ENCODE measurements at regions of chr3 and their contacts with region 1.

Region 1: GRCh38 chr3:72234391-72234790 is 449.4 kb upstream of the PROK2 start:
- DNase-seq: no peak
- H3K4me3 ChIP-seq: no peak overlapping the region
- H3K27ac ChIP-seq: peak overlapping the region in 44 of 59 donors; percentile 15 to 97 (median 78)
- H3K27me3 ChIP-seq: peaks cover 0 to 1% (median 0%) of the 10 kb centered on the region in 45 donors
- CTCF ChIP-seq: no peak

Region 2: DNA sequence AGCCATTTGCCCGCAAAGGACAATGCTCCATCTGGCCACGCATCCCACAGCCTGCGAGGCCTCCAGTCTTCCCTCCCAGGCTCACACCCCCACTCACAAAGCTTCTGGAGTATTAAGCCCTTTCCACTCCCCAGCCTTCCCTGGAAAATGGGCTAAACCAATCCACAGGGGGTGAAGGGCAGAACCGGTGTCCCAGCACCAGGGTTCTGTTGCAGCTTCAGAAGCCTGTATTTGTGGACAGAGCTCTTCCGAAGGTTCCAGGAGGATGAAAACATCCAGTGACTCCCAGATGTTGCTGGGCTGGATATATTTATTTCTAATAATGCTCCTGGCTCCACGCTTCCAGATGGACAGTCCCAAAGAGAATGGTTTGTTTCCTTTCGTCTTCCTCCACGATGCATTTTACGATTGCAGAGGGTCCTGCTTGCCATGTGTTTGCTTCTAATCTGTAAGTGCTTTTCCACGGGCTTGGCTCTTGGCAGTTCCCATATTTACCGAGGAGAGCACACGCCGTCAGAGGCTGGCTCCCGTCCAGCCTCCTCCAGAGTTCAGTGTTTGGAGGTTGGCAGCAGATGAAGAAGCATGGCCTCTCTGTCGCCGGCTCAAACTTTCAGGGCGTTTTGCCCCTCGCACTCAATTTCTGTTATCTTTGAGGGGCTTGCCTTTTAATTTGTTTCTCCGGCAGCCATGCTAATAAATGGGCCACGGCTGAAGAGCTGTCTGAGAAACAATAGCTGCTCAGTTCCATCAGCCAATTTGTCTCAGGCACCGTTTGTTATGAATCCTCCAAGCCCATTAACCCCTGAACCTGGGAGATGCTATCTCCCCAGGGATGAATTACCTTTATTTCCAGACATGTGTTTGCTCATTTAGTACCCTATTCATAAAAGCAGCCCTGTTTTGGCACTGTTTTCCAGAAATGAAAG is 81.6 kb before region 1 on chr3:
- intact Hi-C with region 1: loop called in 1 of 2 experiments (anchors 5 kb)
- DNase-seq: peak; percentile 41 to 73 (median 58)
- H3K4me3 ChIP-seq: peak overlapping the region; percentile 0 to 70 (median 48)
- H3K27ac ChIP-seq: peak overlapping the region; percentile 73 to 98 (median 94)
- H3K27me3 ChIP-seq: no peaks in the 10 kb centered on the region
- CTCF ChIP-seq: peak in 3 of 56 donors; percentile 9 to 22 (median 18)

Region 3: GRCh38 chr3:72171463-72171881 is 62.9 kb before region 1 on chr3:
- intact Hi-C with region 1: loop called (anchors 2 to 5 kb)
- DNase-seq: peak in 5 of 10 donors; percentile 43 to 80 (median 51)
- H3K4me3 ChIP-seq: peak overlapping the region in 42 of 59 donors; percentile 2 to 61 (median 32)
- H3K27ac ChIP-seq: peak overlapping the region; percentile 56 to 99 (median 92)
- H3K27me3 ChIP-seq: no peaks in the 10 kb centered on the region
- CTCF ChIP-seq: peak in 2 of 56 donors; percentile 19 to 22

Region 4: GRCh38 chr3:72185549-72186399 is 48.6 kb before region 1 on chr3:
- intact Hi-C with region 1: loop called in 1 of 2 experiments (anchors 5 kb)
- DNase-seq: no peak
- H3K4me3 ChIP-seq: peak overlapping the region in 1 of 59 donors; percentile 0
- H3K27ac ChIP-seq: peak overlapping the region in 40 of 59 donors; percentile 1 to 81 (median 44)
- H3K27me3 ChIP-seq: no peaks in the 10 kb centered on the region
- CTCF ChIP-seq: no peak

Region 5: DNA sequence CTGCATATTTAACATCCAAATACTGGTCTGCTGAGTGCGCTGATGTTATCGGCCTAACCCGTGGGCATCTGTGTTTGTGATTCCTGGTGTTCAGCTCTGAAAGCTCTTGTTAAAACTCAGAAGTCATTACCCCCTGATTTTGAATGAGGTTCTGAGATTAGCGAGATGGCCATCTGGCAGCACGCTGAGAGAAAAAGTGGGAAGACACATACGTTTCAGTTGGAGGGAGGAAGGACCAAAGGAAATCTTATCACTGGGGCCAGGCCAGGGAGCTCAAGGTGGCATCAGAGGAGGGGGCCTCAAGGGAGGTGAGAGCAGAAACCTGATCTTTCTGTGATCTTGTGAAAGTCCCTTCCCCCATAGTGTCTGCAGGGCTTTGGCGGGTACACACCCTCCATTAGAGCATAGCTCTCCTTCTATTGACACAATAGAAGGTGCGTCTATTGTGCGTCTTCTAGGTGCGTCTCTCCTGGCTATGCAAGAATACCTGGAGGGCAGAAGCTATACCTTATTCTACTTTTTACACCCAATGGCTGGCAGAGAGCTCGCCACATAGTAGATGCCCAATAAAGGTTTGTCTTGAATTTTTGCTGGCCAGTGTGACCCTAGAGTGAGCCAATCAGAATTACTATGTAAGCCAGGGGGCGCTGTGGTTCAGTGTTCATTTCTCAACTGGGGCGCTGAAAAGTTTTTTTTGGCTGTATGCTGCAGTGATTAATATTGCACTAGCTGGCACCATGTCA is 431.5 kb after region 1 on chr3:
- intact Hi-C with region 1: loop called in 1 of 2 experiments (anchors 10 kb)
- DNase-seq: no peak
- H3K4me3 ChIP-seq: no peak overlapping the region
- H3K27ac ChIP-seq: peak overlapping the region in 15 of 59 donors; percentile 2 to 99 (median 97)
- H3K27me3 ChIP-seq: peaks cover 0 to 9% (median 0%) of the 10 kb centered on the region in 45 donors
- CTCF ChIP-seq: peak; percentile 17 to 67 (median 52)

Measured in dorsolateral prefrontal cortex (tissue), 120 donors.